Activated T-helper 1 cell treated with anti-CD3 and anti-CD28 coated beads, Interleukin-12 subunit alpha, Interleukin-12 subunit beta, Interleukin-2, Interleukin-4 antibody, amounts not matched to agents 30 ng/mL and 10 ng/mL and 1 ng/mL, durations not matched to agents 14 hours and 24 hours and 36 hours (primary cell): ENCODE measurements at regions of chr9 and their contacts with region 1.

Region 1: GRCh38 chr9:7570107-7570720 is 229.4 kb downstream of the DMAC1 start:
- DNase-seq: peak; percentile 45
- H3K4me3 Mint-ChIP-seq: no peak overlapping the region
- H3K27ac Mint-ChIP-seq: no peak overlapping the region
- H3K4me1 Mint-ChIP-seq: no peaks in the 10 kb centered on the region
- H3K27me3 Mint-ChIP-seq: peaks cover 25% of the 10 kb centered on the region

Region 2: DNA sequence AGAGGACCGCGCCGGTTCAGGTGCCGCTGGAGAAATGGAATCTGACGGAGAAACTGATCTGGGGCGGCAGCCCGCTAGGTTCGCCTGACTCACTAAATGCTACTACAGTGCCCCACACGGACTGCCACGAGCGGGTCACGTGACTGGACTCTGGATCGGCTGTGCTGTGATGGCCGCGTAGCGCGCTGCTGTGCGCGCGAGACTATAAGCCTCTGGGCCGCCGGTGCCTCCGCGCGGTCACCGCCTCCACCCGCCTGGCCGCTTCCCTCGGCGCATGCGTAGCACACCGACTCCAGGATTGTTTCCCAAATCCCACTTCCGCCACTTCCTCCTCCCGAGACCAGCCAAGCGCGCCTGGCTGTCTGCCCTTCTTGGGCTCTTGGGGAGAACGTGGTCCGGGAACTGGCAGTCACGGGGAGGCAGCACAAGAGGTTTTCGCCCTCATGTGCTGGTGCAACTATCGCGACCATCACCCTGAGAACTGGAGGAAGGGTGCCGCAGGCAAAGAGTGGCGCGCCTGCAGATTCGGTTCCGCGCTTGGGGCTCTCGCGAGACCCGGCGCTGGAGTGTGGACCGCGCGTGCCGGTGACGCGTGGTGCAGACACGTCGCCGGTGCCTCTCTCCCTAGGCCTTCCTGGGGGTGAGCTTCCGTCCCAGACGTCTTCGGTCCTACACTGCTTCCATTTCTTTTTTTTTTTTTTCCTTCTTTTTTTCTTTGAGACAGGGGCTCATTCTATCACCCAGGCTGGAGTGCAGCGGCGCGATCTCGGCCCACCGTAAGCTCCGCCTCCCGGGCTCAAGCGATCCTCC is 888.9 kb before region 1 on chr9:
- intact Hi-C with region 1: no loop called
- DNase-seq: peak; percentile 88
- H3K4me3 Mint-ChIP-seq: peak overlapping the region; percentile 94
- H3K27ac Mint-ChIP-seq: peak overlapping the region; percentile 99
- H3K4me1 Mint-ChIP-seq: peaks cover 24% of the 10 kb centered on the region
- H3K27me3 Mint-ChIP-seq: peaks cover 3% of the 10 kb centered on the region

Region 3: GRCh38 chr9:7358876-7359275 is 211.3 kb before region 1 on chr9:
- intact Hi-C with region 1: no loop called
- DNase-seq: no peak
- H3K4me3 Mint-ChIP-seq: no peak overlapping the region
- H3K27ac Mint-ChIP-seq: no peak overlapping the region
- H3K4me1 Mint-ChIP-seq: no peaks in the 10 kb centered on the region
- H3K27me3 Mint-ChIP-seq: peaks cover 5% of the 10 kb centered on the region

Region 4: DNA sequence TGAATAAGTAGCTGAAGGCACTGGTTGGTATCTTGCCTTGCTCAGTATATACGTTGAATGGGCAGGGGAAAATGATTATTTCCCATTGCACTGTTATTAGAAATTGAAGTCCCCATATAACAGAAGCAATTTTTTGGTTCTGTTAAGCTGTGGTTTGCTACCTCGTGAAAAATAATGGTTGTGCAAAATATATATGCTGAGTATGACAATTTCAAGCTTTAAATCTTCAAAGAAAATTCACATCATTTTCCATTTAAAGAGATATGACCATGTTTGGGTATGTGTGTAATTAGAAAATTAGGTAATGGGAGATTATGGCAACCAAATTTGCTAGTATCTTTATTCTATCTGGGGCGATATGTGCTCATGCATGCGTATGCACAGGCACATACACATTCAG is 89.6 kb after region 1 on chr9:
- intact Hi-C with region 1: loop called (anchors 2 kb)
- DNase-seq: no peak
- H3K4me3 Mint-ChIP-seq: no peak overlapping the region
- H3K27ac Mint-ChIP-seq: no peak overlapping the region
- H3K4me1 Mint-ChIP-seq: no peaks in the 10 kb centered on the region
- H3K27me3 Mint-ChIP-seq: peaks cover 1% of the 10 kb centered on the region

Region 5: DNA sequence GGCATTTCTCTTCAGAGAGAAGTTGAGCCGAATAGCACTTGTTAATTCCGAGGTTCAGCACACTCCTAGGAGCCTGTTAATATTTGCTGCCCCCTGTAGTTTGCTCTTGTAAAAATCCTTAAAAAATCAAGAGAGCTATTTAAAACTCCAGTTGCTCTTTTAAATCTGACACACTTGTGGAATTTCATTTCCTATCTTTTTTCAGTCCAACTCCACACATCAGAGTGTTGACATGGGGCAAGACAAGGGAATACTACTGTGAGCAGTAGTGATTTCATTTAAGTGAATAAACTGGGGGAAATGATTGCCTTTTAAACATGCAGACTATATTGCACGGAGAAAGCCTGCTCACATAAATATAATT is 1325.6 kb after region 1 on chr9:
- intact Hi-C with region 1: loop called (anchors 5 kb)
- DNase-seq: no peak
- H3K4me3 Mint-ChIP-seq: no peak overlapping the region
- H3K27ac Mint-ChIP-seq: no peak overlapping the region
- H3K4me1 Mint-ChIP-seq: no peaks in the 10 kb centered on the region
- H3K27me3 Mint-ChIP-seq: no peaks in the 10 kb centered on the region